Endothelial cell of umbilical vein (primary cell): ENCODE measurements at regions of chr7 and their contacts with region 1.

Region 1: DNA sequence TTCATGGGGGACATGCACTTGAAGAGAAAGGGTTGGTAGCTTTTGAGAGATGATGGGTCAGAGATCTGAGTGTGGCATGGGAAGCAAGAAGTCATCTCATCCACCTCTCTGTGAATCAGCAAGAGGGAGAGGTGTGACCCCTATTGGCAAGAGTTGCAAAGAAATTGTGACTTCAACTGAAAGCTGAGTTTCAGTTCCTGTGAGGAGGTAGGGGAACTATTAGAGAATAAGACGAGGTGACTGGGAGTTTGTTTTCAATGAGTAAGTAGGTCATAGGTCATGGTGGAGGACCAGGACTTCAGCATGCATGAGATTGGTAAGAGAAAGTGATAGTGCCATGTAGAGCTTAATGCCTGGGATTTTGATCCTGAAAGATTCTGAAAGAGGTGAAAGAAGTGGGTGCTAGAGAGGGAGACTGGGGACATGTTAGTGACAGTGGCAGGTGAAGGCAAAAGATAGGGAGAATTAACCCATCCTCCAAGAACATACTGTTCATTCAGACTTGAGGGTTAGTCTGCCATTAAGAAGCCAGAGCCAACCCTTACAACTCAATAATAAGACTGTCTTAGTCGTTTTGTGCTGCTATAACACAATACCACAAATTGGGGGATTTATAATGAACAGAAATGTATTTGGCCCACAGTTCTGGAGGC is 75.5 kb upstream of the CAPZA2 start:
- DNase-seq: peak; percentile 76
- H3K4me3 ChIP-seq: no peak overlapping the region
- H3K27ac ChIP-seq: no peak overlapping the region
- H3K4me1 ChIP-seq: peaks cover 7% of the 10 kb centered on the region
- H3K27me3 ChIP-seq: no peaks in the 10 kb centered on the region
- CTCF ChIP-seq: peak; percentile 33 to 45
- POLR2A ChIP-seq: no peak

Region 2: GRCh38 chr7:116699721-116700120 is 87.2 kb before region 1 on chr7:
- CTCF ChIA-PET with region 1: no interaction called
- POLR2A ChIA-PET with region 1: no interaction called
- dilution Hi-C with region 1: no loop called
- intact Hi-C with region 1: no loop called
- DNase-seq: no peak
- H3K4me3 ChIP-seq: no peak overlapping the region
- H3K27ac ChIP-seq: no peak overlapping the region
- H3K4me1 ChIP-seq: peaks cover 19% of the 10 kb centered on the region
- H3K27me3 ChIP-seq: no peaks in the 10 kb centered on the region
- CTCF ChIP-seq: no peak
- POLR2A ChIP-seq: no peak

Region 3: DNA sequence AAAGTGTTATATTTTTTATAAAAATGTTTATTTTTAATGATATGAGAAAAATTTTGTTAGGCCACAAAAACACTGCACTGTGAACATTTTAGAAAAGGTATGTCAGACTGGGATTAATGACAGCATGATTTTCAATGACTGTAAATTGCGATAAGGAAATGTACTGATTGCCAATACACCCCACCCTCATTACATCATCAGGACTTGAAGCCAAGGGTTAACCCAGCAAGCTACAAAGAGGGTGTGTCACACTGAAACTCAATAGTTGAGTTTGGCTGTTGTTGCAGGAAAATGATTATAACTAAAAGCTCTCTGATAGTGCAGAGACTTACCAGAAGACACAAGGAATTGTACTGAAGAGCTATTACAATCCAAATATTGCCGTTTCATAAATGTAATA is 10.7 kb after region 1 on chr7:
- CTCF ChIA-PET with region 1: interaction called, 11 read pairs
- POLR2A ChIA-PET with region 1: no interaction called
- dilution Hi-C with region 1: no loop called
- intact Hi-C with region 1: no loop called
- DNase-seq: peak; percentile 46
- H3K4me3 ChIP-seq: no peak overlapping the region
- H3K27ac ChIP-seq: no peak overlapping the region
- H3K4me1 ChIP-seq: peaks cover 7% of the 10 kb centered on the region
- H3K27me3 ChIP-seq: no peaks in the 10 kb centered on the region
- CTCF ChIP-seq: no peak
- POLR2A ChIP-seq: no peak

Region 4: GRCh38 chr7:116911801-116912200 is 124.9 kb after region 1 on chr7:
- CTCF ChIA-PET with region 1: no interaction called
- POLR2A ChIA-PET with region 1: no interaction called
- dilution Hi-C with region 1: no loop called
- intact Hi-C with region 1: no loop called
- DNase-seq: no peak
- H3K4me3 ChIP-seq: no peak overlapping the region
- H3K27ac ChIP-seq: no peak overlapping the region
- H3K4me1 ChIP-seq: no peaks in the 10 kb centered on the region
- H3K27me3 ChIP-seq: no peaks in the 10 kb centered on the region
- CTCF ChIP-seq: no peak
- POLR2A ChIP-seq: no peak